Aorta (tissue), 5 donors: ENCODE measurements at regions of chr6 and their contacts with region 1.

Region 1: DNA sequence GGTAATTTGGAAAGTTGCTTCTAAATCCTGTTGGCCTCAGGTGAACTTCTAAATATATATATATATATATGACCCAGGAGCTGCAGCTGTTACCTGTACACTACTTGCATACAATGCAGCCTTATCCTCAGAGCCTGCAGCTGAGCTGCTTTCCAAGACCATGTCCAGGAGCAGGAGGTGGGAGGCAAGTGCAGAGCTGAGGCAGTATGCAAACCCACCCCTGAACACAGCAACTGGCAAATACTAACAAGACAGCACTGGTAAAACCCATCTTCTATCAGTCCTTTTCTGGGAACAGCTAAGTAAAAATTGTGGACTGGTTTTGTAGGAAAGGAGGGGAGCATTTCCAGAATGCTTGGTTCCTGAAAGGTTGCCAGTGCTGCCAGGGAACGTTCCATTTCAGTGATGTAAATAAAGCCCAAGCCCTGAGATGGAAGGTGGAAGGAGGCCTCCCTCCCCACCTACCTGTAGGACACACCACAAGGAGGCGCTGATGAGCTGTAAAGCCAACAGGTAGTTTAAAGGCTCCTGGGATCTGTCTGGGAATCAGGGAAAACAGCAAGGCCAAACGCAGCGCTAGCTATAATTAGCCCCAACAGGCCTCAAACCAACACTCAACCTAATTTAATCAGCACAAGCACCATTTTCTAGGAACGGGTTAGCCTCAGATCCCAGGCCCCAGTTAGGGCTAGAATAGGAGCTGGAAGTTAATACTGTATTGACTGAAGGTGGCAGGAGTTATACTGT is 93.8 kb upstream of the MAP7 start:
- DNase-seq: peak; percentile 94 to 96
- ATAC-seq: peak; percentile 94
- H3K4me3 ChIP-seq: no peak overlapping the region
- H3K27ac ChIP-seq: peak overlapping the region; percentile 16 to 83
- H3K4me1 ChIP-seq: peaks cover 0 to 8% of the 10 kb centered on the region in 2 donors
- H3K27me3 ChIP-seq: no peaks in the 10 kb centered on the region

Region 2: DNA sequence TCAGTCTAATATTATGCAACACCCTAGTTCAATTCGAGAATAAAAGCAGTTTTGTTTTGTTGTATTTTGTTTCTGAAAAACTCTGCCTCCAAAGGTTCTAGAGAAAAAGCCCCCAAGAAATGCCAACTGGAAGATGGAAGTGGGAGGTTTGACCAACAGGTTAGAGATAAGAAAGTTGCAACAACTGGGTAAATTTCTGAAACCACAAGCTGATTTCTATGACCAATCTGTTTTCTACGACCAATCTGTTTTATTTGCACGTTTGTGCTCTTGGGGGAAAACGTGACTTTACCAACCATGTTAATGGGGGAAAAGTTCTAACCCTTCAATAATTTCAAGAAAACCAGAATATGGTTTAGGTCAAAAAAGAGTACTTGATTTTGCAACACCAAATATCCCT is 619.3 kb before region 1 on chr6:
- intact Hi-C with region 1: no loop called
- DNase-seq: no peak
- ATAC-seq: no peak
- H3K4me3 ChIP-seq: no peak overlapping the region
- H3K27ac ChIP-seq: no peak overlapping the region
- H3K4me1 ChIP-seq: no peaks in the 10 kb centered on the region
- H3K27me3 ChIP-seq: no peaks in the 10 kb centered on the region

Region 3: DNA sequence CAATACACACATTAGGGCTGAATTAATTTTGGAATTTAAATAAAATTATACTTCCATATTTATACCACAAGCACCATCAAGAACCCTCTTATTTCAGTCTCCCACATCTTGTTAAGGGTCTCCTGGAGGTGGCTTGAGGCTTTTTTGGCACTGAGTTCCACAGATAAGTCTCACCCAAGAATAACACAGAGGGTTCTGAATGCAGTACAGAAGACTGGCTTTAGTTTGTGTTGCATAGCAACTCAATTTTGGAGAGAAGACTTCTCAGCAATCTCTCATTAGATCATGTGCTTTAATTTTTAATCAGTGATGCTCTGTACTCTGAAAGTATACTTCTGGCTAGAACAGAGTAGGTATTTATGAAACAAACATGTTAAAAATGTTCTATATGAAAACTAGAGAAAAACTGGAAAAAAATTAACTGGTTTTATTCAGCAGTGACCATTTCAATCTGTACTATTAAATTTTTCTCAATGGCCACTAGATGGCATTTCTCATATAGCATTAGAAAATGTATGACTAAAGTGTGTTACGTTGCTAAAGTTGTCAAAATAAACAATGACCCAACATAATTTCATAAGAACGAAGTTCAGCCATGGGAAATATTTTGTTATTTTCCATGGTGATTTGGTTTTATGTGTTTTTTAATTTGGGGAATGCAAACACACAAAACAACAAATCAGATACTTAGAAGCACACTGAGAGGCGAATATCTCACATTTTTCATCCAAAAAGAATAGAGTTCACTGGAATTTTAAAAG is 61.1 kb before region 1 on chr6:
- intact Hi-C with region 1: loop called (anchors 2 kb)
- DNase-seq: no peak
- ATAC-seq: peak; percentile 80
- H3K4me3 ChIP-seq: no peak overlapping the region
- H3K27ac ChIP-seq: peak overlapping the region; percentile 63 to 78
- H3K4me1 ChIP-seq: peaks cover 2 to 8% of the 10 kb centered on the region in 2 donors
- H3K27me3 ChIP-seq: no peaks in the 10 kb centered on the region

Region 4: GRCh38 chr6:136607932-136608772 is 35.9 kb before region 1 on chr6:
- intact Hi-C with region 1: loop called (anchors 2 to 5 kb)
- DNase-seq: peak in 1 of 2 donors; percentile 73
- ATAC-seq: peak; percentile 61
- H3K4me3 ChIP-seq: no peak overlapping the region
- H3K27ac ChIP-seq: peak overlapping the region; percentile 6 to 51
- H3K4me1 ChIP-seq: peaks cover 3 to 4% of the 10 kb centered on the region in 2 donors
- H3K27me3 ChIP-seq: no peaks in the 10 kb centered on the region